HEK293 (cell line): ENCODE measurements at regions of chr3 and their contacts with region 1.

Region 1: GRCh38 chr3:87298111-87298718 is 21.8 kb upstream of the POU1F1 start:
- H3K4me3 ChIP-seq: no peak overlapping the region
- H3K27ac ChIP-seq: no peak overlapping the region
- H3K4me1 ChIP-seq: no peaks in the 10 kb centered on the region
- CTCF ChIP-seq: peak; percentile 46; the same call in 1 of the 2 replicates

Region 2: GRCh38 chr3:87272718-87273341 is 25.4 kb before region 1 on chr3:
- CTCF ChIA-PET with region 1: no interaction called
- POLR2A ChIA-PET with region 1: no interaction called
- H3K4me3 ChIP-seq: no peak overlapping the region
- H3K27ac ChIP-seq: no peak overlapping the region
- H3K4me1 ChIP-seq: 0 out of 2 replicates have a peak, but pooled peaks cover 2% of the 10 kb centered on the region
- CTCF ChIP-seq: no peak

Region 3: DNA sequence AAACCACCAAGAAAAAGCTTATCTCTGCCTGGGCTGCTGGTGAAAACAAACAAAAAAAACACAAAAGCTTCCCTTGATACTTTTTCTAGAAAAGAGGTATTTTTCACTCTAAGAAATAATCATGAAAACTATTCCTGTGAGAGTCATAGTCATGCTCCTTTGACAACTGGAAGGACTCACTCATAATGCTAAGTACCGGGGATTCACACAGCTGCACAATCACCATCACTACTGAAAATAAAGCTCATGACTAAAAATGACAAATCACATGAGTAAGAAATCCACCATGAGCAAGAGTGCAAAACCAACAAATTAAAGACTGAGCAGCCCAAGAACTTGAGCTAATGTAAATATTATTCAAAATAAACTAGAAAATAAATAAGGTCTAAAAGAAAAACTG is 11.2 kb before region 1 on chr3:
- CTCF ChIA-PET with region 1: interaction called, 18 read pairs
- POLR2A ChIA-PET with region 1: no interaction called
- H3K4me3 ChIP-seq: no peak overlapping the region
- H3K27ac ChIP-seq: no peak overlapping the region
- H3K4me1 ChIP-seq: no peaks in the 10 kb centered on the region
- CTCF ChIP-seq: no peak